MCF 10A (cell line): ENCODE measurements at regions of chr1 and their contacts with region 1.

Region 1: GRCh38 chr1:151839457-151840405 is at the start of gene C2CD4D:
- DNase-seq: peak; percentile 84
- H3K4me3 Mint-ChIP-seq: peak within 1 kb of the TSS; percentile 85
- H3K27ac Mint-ChIP-seq: peak within 1 kb of the TSS; percentile 91
- H3K4me1 Mint-ChIP-seq: peaks cover 41% of the 10 kb centered on the region
- H3K27me3 Mint-ChIP-seq: no peaks in the 10 kb centered on the region
- CTCF ChIP-seq: no peak
- total RNA-seq, gene C2CD4D: not detected in 2 replicates

Region 2: DNA sequence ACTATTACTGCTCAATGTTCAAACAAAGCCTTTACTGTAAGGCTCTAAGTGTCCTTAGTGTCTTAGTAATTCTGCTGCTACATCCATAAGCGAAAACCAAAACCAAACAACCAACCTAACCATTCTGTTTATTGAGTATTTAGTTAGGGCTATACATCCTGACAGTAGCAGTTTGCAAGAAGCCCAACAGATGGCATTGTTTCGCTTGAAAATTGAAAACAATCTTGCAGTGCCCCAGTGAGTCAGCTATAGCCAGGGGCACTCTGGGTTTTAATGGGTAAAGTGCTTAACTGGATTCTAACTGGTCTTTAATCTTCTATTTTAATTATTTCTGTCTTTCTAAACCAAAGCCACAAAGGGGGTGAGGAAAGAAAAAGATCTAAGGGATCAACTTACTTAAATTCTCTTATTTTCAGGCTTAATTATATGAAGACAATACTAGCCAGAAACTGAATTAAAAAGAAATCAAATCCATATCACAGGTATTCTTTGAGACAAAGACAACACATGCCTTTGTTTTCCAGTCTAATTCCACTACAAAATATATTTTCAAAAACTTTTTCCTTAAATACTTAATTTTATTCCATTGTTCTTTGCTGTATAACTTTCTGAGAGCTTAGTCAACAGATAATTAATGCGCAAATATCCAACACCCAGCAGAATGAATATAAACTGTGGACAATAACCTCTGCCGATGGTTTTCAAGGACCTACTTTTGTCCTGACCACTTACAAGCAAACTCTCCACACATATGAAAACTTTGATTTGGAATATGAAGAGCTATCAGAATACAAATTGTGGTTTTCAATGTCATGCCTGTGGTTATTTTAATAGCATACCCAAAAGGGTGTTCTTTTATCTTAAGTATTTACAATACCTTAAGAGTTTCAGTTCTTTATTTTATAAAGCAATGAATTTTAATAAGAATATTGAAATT is 395.6 kb before region 1 on chr1:
- CTCF ChIA-PET with region 1: interaction called, 8 read pairs
- POLR2A ChIA-PET with region 1: interaction called, 6 read pairs
- intact Hi-C with region 1: loop called (anchors 1 kb)
- DNase-seq: peak; percentile 94
- H3K4me3 Mint-ChIP-seq: no peak overlapping the region
- H3K27ac Mint-ChIP-seq: no peak overlapping the region
- H3K4me1 Mint-ChIP-seq: peaks cover 24% of the 10 kb centered on the region
- H3K27me3 Mint-ChIP-seq: no peaks in the 10 kb centered on the region
- CTCF ChIP-seq: peak; percentile 93

Region 3: DNA sequence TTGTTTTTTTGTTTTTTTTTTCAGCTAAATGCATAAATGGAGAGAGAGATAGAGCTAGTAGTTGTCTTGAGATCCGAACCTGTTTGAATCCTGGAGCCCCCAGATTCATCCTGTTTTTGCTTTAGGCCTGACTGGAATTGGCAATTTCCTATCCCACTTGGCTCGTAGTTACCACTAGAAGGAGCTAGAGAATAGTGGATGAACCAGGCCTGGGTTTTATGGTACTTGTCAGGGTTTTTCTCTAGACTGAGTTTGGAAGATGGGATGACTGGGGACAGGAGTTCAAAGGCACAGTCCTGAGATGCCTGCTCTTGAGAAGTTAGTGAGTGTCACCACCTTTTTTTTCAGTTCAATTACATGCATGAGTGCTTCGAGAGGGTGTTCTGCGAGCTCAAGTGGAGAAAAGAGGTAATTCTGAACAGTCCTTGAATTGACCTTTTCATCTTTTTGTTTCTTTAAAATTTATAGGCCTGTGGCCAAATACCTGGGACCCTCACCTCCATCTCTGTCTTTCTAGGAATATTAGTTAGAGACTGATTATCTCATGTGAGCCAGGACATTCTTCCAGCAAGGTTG is 146.6 kb before region 1 on chr1:
- CTCF ChIA-PET with region 1: interaction called, 15 read pairs
- POLR2A ChIA-PET with region 1: no interaction called
- intact Hi-C with region 1: loop called (anchors 1 kb)
- DNase-seq: peak; percentile 60
- H3K4me3 Mint-ChIP-seq: no peak overlapping the region
- H3K27ac Mint-ChIP-seq: peak overlapping the region; percentile 43
- H3K4me1 Mint-ChIP-seq: no peaks in the 10 kb centered on the region
- H3K27me3 Mint-ChIP-seq: no peaks in the 10 kb centered on the region
- CTCF ChIP-seq: peak; percentile 74

Region 4: DNA sequence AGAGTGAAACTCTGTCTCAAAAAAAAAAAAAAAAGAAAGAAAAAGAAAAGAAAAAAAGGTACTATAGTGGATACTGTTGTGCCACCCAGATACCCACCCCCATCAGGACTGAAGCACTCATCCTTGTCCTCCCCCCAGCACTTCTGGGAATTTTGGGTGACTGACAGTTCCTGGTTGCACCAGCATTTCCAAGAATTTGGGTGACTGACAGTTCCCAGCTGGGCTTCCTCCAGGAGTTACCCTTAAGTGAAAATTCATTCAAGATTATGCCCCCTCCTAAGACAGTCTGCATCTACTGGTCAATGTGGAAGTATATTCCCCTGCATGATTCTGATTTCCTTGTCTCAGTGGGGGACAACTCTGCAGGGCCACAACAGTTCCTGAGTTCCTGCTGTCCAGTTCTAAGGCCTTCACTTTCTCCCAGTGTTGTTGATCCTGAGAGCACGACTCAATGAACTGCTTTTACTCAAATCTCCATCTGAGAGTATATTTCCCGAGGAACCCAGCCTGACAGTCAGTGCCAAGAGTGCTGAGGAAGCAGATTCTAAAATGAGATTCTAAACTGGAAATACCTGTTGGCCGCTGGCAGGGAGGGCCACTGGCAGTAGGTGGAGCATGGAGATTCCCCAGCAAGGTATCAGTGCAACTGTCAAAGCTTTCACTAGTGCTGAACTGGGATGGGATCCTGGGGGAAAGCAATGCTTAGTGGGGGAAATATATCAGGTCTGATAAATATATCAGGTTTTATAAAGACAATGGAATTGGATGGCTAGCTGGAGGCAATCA is 99.9 kb before region 1 on chr1:
- CTCF ChIA-PET with region 1: interaction called, 26 read pairs
- POLR2A ChIA-PET with region 1: interaction called, 4 read pairs
- intact Hi-C with region 1: loop called (anchors 1 kb)
- DNase-seq: no peak
- H3K4me3 Mint-ChIP-seq: no peak overlapping the region
- H3K27ac Mint-ChIP-seq: no peak overlapping the region
- H3K4me1 Mint-ChIP-seq: peaks cover 6% of the 10 kb centered on the region
- H3K27me3 Mint-ChIP-seq: peaks cover 30% of the 10 kb centered on the region
- CTCF ChIP-seq: no peak

Region 5: DNA sequence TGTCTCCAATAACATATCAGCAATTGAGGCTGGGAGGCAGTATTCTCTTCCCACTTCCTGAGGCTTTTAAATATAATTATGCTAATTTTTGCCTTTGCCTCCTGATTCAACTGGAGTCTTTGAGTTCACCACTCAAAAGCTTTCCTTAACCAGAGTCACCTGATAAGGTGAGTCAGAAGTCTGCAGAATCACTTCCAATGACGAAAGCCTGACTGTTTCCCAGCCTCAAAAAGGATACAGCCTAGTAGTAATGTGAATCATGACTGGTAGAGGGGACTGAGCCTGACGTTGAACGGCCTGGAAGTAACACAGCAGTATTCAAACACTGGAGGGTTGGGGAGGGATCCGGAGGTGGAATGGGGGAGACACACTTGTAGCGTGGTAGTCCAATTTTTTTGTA is 66.0 kb before region 1 on chr1:
- CTCF ChIA-PET with region 1: interaction called, 10 read pairs
- POLR2A ChIA-PET with region 1: interaction called, 3 read pairs
- intact Hi-C with region 1: no loop called
- DNase-seq: peak; percentile 83
- H3K4me3 Mint-ChIP-seq: no peak overlapping the region
- H3K27ac Mint-ChIP-seq: peak overlapping the region; percentile 2
- H3K4me1 Mint-ChIP-seq: peaks cover 6% of the 10 kb centered on the region
- H3K27me3 Mint-ChIP-seq: no peaks in the 10 kb centered on the region
- CTCF ChIP-seq: no peak

Region 6: GRCh38 chr1:151820940-151821339 is 18.8 kb before region 1 on chr1:
- CTCF ChIA-PET with region 1: interaction called, 17 read pairs
- POLR2A ChIA-PET with region 1: no interaction called
- intact Hi-C with region 1: no loop called
- DNase-seq: peak; percentile 71
- H3K4me3 Mint-ChIP-seq: no peak overlapping the region
- H3K27ac Mint-ChIP-seq: no peak overlapping the region
- H3K4me1 Mint-ChIP-seq: peaks cover 16% of the 10 kb centered on the region
- H3K27me3 Mint-ChIP-seq: no peaks in the 10 kb centered on the region
- CTCF ChIP-seq: no peak

Region 7: GRCh38 chr1:151881456-151881855 is 41.7 kb after region 1 on chr1:
- CTCF ChIA-PET with region 1: interaction called, 13 read pairs
- POLR2A ChIA-PET with region 1: interaction called, 4 read pairs
- intact Hi-C with region 1: no loop called
- DNase-seq: peak; percentile 30
- H3K4me3 Mint-ChIP-seq: no peak overlapping the region
- H3K27ac Mint-ChIP-seq: no peak overlapping the region
- H3K4me1 Mint-ChIP-seq: peaks cover 5% of the 10 kb centered on the region
- H3K27me3 Mint-ChIP-seq: no peaks in the 10 kb centered on the region
- CTCF ChIP-seq: peak; percentile 6